BJ (cell line): ENCODE measurements at regions of chr4 and their contacts with region 1.

Region 1: DNA sequence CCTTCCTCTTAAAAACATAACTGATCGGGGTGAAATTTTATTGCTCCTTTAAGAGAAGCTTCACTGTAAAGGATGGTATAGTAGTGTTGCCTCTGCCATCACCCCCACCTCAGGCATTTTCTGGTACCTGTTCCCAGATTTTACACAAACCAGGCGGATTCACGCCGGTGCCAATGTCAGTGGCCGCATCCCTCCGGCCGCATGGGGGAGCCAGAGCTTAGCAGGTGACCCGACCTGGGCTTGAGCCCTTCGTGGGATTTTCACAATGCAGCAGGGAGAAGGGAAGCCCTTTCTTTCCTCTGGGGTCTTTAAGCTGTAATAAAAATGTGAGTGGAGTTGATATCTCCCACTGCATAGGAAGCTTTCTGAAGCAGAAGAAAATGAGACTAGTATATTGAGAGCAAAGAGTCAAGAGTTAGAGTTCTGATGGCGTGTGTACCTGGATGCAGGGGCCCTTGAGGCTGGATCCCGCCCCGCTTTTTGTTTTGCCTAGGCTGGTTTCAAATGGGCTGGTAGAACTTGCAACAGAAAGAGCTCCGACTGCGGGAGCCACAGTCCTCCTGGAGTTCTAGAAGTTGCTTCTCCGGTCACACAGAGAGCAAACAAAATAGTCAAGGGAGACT is 59.4 kb downstream of the POLR2B start:
- DNase-seq: no peak
- H3K4me3 ChIP-seq: no peak overlapping the region
- H3K27me3 ChIP-seq: no peaks in the 10 kb centered on the region
- CTCF ChIP-seq: peak; percentile 86

Region 2: DNA sequence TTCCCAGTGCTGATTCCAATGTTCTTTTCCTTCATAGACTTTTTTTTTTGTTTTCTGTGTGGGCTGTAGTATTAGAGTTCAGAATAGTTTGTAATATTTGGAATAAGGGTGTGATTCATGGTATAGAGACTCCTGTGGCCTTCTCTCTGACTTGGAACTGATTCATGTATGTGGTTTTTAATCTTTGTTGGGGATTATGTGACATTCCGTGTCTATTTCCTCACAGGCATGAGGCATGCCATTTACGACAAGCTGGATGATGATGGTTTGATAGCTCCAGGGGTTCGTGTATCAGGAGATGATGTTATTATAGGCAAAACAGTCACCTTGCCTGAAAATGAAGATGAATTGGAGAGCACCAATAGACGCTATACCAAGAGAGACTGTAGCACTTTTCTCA is 15.0 kb before region 1 on chr4:
- CTCF ChIA-PET with region 1: interaction called, 12 read pairs
- POLR2A ChIA-PET with region 1: interaction called, 3 read pairs
- DNase-seq: peak; percentile 57
- H3K4me3 ChIP-seq: no peak overlapping the region
- H3K27me3 ChIP-seq: no peaks in the 10 kb centered on the region
- CTCF ChIP-seq: no peak